HEK293 (cell line): ENCODE measurements at regions of chr1 and their contacts with region 1.

Region 1: GRCh38 chr1:85911742-85912141 is 203.5 kb upstream of the ZNHIT6 start:
- H3K4me3 ChIP-seq: no peak overlapping the region
- H3K27ac ChIP-seq: no peak overlapping the region
- H3K4me1 ChIP-seq: no peaks in the 10 kb centered on the region
- CTCF ChIP-seq: no peak

Region 2: DNA sequence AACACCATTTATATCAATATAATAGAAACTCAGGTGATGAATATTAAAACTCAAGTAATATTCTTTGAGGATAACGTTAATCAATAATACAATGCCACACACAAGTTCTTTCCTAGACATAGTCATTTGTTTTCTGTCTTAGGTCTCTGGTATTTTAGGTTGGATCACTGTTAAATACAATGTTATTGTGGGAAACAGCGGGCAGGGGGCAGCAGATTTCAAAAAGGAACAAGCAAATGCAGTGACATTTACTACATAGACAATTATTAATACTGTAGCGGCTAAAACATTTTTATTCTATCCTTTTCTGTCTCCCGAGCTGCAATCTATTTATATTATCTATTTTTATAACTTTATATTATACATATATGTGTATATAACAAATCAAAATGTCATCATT is 17.1 kb before region 1 on chr1:
- CTCF ChIA-PET with region 1: interaction called, 10 read pairs
- POLR2A ChIA-PET with region 1: no interaction called
- H3K4me3 ChIP-seq: no peak overlapping the region
- H3K27ac ChIP-seq: no peak overlapping the region
- H3K4me1 ChIP-seq: no peaks in the 10 kb centered on the region
- CTCF ChIP-seq: no peak

Region 3: GRCh38 chr1:85943526-85943925 is 31.8 kb after region 1 on chr1:
- CTCF ChIA-PET with region 1: no interaction called
- POLR2A ChIA-PET with region 1: no interaction called
- H3K4me3 ChIP-seq: no peak overlapping the region
- H3K27ac ChIP-seq: no peak overlapping the region
- H3K4me1 ChIP-seq: no peaks in the 10 kb centered on the region
- CTCF ChIP-seq: no peak